ENCODE measurements at regions of chr12 and their contacts with region 1.

Region 1: GRCh38 chr12:111396726-111397445 is 8.8 kb upstream of the SH2B3 start:
- DNase-seq: peak; percentile 71 to 97 (median 88)
- ATAC-seq: peak; percentile 98
- H3K4me3 Mint-ChIP-seq: peak overlapping the region; percentile 66 to 87 (median 78)
- H3K27ac Mint-ChIP-seq: peak overlapping the region in 8 of 10 donors; percentile 29 to 90 (median 70)
- H3K4me1 Mint-ChIP-seq: peaks cover 7 to 29% (median 14%) of the 10 kb centered on the region in 4 donors
- H3K27me3 Mint-ChIP-seq: no peaks in the 10 kb centered on the region

Region 2: DNA sequence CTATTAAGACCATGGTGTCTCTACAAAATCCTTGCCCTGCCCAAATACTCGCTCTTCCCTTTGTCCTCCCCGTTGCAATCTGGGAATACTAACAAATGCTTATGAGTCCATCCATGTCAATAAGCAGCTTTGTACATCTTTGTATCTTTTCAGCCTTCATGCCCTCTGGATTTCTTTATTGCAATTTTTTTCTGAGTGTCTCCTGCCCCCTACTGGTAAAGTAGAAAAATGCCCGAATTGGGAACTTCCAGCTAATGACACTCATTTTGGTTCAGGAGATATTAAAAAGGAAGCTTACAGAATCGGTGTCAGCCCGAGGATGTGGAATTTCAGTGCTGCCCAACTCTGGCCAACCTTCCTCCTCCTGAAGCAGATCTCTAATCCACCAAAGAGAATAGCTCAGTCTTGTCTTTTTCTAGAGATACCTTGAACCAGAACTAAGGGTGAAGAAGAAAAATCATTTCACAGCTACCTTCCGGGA is 54.8 kb after region 1 on chr12:
- POLR2A ChIA-PET with region 1: interaction called, 32 read pairs
- DNase-seq: peak in 5 of 10 donors; percentile 26 to 83 (median 73)
- ATAC-seq: peak; percentile 59 to 70
- H3K4me3 Mint-ChIP-seq: no peak overlapping the region
- H3K27ac Mint-ChIP-seq: peak overlapping the region in 9 of 10 donors; percentile 1 to 83 (median 65)
- H3K4me1 Mint-ChIP-seq: peaks cover 8 to 49% (median 21%) of the 10 kb centered on the region in 4 donors
- H3K27me3 Mint-ChIP-seq: no peaks in the 10 kb centered on the region

Measured in naive thymus-derived CD8-positive, alpha-beta T cell (primary cell).